A549 (cell line): ENCODE measurements at regions of chr1 and their contacts with region 1.

Region 1: GRCh38 chr1:244796718-244797406 is 38.6 kb upstream of the COX20 start:
- DNase-seq: peak; percentile 42 to 67
- ATAC-seq: peak; percentile 67 to 81; a peak in 3 of 6 replicates
- H3K4me3 ChIP-seq: no peak overlapping the region
- H3K27ac ChIP-seq: no peak overlapping the region
- H3K4me1 ChIP-seq: no peaks in the 10 kb centered on the region
- CTCF ChIP-seq: peak; percentile 89
- EP300 ChIP-seq: no peak
- POLR2A ChIP-seq: no peak
- RAD21 ChIP-seq: peak; percentile 81 to 92

Region 2: DNA sequence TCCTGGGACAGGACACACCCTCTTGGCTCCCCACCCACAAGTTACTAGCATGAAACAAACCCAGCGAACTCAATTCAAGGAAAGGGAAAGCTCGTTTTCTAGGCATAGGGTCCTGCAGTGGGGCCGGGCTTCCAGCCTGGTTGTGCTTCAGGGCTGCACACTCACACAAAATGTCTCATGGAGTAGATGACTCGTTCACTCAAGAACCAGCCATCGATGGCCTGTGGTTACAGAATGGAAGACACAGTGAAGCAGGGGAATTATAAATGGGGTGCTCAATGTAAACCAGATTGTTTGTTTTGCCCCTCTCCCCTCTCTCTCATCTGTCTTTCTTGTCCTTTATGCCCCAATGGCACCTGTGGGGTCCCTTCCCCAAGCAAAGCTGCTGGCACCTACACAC is 17.5 kb before region 1 on chr1:
- CTCF ChIA-PET with region 1: interaction called, 14 read pairs
- POLR2A ChIA-PET with region 1: no interaction called
- DNase-seq: no peak
- ATAC-seq: peak in 1 of 2 experiments; percentile 49; a peak in 1 of 6 replicates
- H3K4me3 ChIP-seq: no peak overlapping the region
- H3K27ac ChIP-seq: no peak overlapping the region
- H3K4me1 ChIP-seq: no peaks in the 10 kb centered on the region
- CTCF ChIP-seq: no peak
- EP300 ChIP-seq: no peak
- POLR2A ChIP-seq: no peak
- RAD21 ChIP-seq: no peak

Region 3: GRCh38 chr1:244810221-244810620 is 13.4 kb after region 1 on chr1:
- CTCF ChIA-PET with region 1: interaction called, 22 read pairs
- POLR2A ChIA-PET with region 1: no interaction called
- DNase-seq: no peak
- ATAC-seq: no peak
- H3K4me3 ChIP-seq: no peak overlapping the region
- H3K27ac ChIP-seq: no peak overlapping the region
- H3K4me1 ChIP-seq: no peaks in the 10 kb centered on the region
- CTCF ChIP-seq: no peak
- EP300 ChIP-seq: no peak
- POLR2A ChIP-seq: no peak
- RAD21 ChIP-seq: no peak